Heart right ventricle (tissue), 16 donors: ENCODE measurements at regions of chr6 and their contacts with region 1.

Region 1: DNA sequence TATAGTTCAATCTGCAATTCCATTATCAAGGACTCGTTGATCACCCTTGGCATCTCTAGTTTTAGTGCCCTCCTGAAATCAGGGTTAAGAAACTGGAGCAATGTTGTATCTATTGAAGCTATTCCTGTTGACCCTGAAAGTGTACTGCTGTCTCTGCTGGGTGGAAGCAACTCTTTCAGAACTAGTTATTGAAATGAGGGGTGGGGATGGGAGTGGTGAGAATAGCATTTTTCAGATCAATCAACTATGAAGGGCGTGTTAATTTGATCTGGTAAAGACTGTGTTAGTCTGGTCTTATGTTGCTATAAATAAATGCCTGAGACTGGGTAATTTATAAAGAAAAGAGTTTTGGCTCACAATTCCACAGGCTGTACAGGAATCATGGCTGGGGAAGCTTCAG is 152.5 kb upstream of the BMP5 start:
- DNase-seq: no peak
- ATAC-seq: no peak
- H3K4me3 ChIP-seq: no peak overlapping the region
- H3K27ac ChIP-seq: no peak overlapping the region
- H3K4me1 ChIP-seq: peaks cover 0 to 2% (median 0%) of the 10 kb centered on the region in 9 donors
- H3K27me3 ChIP-seq: no peaks in the 10 kb centered on the region
- CTCF ChIP-seq: no peak

Region 2: DNA sequence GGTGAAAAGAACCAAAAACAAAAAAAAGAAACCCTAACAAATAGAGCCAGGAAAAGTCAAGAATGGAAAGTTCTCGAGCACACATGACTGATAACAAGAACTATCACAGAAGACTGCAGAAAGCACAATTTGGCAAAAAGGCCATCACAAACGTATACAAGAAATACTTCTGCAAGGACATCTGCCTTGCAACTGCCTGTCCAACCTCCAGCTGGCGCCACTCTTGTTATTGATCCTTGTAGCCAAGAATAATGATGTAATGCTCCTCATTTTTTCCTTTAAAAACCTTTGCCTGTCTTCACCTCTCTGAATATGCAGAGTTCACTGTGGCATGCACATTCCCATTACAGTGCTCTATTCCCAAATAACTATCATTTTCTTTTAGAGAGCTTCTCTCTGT is 64.6 kb before region 1 on chr6:
- intact Hi-C with region 1: no loop called
- DNase-seq: no peak
- ATAC-seq: peak in 2 of 8 donors; percentile 11 to 29
- H3K4me3 ChIP-seq: no peak overlapping the region
- H3K27ac ChIP-seq: no peak overlapping the region
- H3K4me1 ChIP-seq: peaks cover 0 to 2% (median 0%) of the 10 kb centered on the region in 9 donors
- H3K27me3 ChIP-seq: no peaks in the 10 kb centered on the region
- CTCF ChIP-seq: peak in 2 of 9 donors; percentile 9 to 22

Region 3: GRCh38 chr6:56004426-56004825 is 23.4 kb before region 1 on chr6:
- intact Hi-C with region 1: loop called in 1 of 10 experiments (anchors 1 kb)
- DNase-seq: no peak
- ATAC-seq: no peak
- H3K4me3 ChIP-seq: no peak overlapping the region
- H3K27ac ChIP-seq: no peak overlapping the region
- H3K4me1 ChIP-seq: no peaks in the 10 kb centered on the region
- H3K27me3 ChIP-seq: no peaks in the 10 kb centered on the region
- CTCF ChIP-seq: no peak